GM10248 (cell line): ENCODE measurements at regions of chr6 and their contacts with region 1.

Region 1: DNA sequence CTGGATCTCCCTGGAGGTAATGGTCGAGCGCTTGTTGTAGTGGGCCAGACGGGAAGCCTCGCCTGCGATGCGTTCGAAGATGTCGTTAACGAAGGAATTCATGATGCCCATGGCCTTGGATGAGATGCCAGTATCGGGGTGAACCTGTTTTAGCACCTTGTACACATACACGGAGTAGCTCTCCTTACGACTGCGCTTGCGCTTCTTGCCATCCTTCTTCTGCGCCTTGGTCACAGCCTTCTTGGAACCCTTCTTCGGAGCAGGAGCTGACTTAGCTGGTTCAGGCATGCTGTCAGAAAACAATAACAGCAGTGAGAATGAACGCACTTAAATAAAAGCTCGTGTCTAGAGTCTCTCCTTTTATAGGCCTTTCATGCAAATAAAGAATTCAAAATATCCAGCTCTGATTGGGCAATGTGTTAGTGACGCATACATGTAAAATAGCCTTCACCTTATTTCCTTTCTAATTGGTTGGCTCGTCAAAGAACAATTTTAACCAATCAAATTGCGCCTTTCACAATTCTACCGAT is 129.2 kb downstream of the HFE start:
- DNase-seq: peak; percentile 85
- CTCF ChIP-seq: no peak

Region 2: GRCh38 chr6:26045065-26045927 is 171.1 kb before region 1 on chr6:
- CTCF ChIA-PET with region 1: no interaction called
- POLR2A ChIA-PET with region 1: interaction called, 35 read pairs
- DNase-seq: peak; percentile 88
- CTCF ChIP-seq: peak; percentile 12

Region 3: DNA sequence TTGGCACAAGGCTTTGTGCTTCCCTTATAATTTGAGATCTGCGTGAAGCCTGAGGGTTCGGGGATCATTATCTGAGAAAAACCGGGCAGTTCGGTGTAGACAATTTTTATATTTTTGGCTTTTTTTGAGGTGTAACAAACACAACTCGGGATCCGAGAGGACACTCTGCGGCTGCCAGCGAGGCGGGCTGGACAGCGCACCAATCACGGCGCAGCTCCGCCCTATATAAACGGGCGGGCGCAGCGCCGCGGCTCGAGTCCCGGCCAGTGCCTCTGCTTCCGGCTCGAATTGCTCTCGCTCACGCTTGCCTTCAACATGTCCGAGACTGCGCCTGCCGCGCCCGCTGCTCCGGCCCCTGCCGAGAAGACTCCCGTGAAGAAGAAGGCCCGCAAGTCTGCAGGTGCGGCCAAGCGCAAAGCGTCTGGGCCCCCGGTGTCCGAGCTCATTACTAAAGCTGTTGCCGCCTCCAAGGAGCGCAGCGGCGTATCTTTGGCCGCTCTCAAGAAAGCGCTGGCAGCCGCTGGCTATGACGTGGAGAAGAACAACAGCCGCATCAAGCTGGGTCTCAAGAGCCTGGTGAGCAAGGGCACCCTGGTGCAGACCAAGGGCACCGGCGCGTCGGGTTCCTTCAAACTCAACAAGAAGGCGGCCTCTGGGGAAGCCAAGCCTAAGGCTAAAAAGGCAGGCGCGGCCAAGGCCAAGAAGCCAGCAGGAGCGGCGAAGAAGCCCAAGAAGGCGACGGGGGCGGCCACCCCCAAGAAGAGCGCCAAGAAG is 60.2 kb before region 1 on chr6:
- CTCF ChIA-PET with region 1: interaction called, 4 read pairs
- POLR2A ChIA-PET with region 1: interaction called, 90 read pairs
- DNase-seq: peak; percentile 89
- CTCF ChIP-seq: no peak

Region 4: GRCh38 chr6:26196846-26197648 is 19.4 kb before region 1 on chr6:
- CTCF ChIA-PET with region 1: interaction called, 17 read pairs
- POLR2A ChIA-PET with region 1: interaction called, 306 read pairs
- DNase-seq: peak; percentile 87
- CTCF ChIP-seq: peak; percentile 11

Region 5: DNA sequence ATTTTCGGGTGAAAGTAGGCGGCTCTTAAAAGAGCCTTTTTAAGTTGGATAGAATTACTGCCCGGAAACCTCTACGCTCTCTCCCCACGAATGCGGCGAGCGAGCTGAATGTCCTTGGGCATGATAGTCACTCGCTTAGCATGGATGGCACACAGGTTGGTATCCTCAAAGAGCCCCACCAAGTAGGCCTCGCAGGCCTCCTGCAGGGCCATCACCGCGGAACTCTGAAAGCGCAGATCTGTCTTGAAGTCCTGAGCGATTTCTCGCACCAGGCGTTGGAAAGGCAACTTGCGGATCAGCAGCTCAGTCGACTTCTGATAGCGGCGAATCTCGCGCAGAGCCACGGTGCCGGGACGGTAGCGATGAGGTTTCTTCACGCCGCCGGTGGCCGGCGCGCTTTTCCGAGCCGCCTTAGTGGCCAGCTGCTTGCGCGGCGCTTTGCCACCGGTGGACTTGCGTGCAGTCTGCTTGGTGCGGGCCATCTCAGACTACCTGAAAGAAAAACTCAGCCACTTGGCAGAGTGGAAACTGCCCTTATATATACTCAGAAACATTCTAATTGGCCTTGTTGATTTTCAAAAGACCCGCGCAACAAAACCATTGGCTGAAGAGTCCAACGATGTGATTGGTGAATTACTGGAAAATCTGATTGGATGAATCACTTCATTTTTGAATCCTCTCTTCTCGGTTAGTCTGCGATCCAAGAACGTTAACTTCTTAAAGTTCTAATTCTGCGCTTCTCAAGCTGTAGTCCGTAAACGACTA is 54.7 kb after region 1 on chr6:
- CTCF ChIA-PET with region 1: interaction called, 3 read pairs
- POLR2A ChIA-PET with region 1: interaction called, 90 read pairs
- DNase-seq: peak; percentile 91
- CTCF ChIP-seq: no peak

Region 6: DNA sequence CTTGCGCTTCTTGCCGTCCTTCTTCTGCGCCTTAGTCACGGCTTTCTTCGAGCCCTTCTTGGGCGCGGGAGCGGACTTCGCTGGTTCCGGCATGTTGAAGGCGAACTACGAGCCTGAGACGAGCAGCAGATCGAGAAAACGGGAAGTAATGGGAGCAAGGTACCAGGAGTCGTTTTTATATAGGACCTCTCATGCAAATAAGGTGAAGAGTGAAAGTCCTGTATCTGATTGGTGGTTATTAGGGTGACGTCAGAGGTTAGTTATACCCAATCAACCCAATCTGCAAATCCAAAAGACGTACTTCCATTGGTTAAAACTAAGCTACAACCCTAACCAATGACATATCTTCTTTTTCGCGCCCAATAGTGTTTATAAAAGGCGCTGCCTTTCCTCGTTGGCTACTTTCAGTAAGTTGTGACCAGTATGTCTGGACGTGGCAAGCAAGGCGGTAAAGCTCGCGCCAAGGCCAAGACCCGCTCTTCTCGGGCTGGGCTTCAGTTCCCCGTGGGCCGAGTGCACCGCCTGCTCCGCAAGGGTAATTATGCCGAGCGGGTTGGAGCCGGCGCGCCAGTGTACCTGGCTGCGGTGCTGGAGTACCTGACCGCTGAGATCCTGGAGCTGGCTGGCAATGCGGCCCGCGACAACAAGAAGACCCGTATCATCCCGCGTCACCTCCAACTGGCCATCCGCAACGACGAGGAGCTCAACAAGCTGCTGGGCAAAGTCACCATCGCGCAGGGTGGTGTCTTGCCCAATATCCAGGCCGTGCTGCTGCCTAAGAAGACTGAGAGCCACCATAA is 930.5 kb after region 1 on chr6:
- CTCF ChIA-PET with region 1: no interaction called
- POLR2A ChIA-PET with region 1: interaction called, 17 read pairs
- DNase-seq: peak; percentile 95
- CTCF ChIP-seq: no peak